Activated CD8-positive, alpha-beta memory T cell treated with anti-CD3 and anti-CD28 coated beads, Interleukin-2, amount 10 ng/mL, durations not matched to agents 7 days and 5 days (primary cell): ENCODE measurements at regions of chr6 and their contacts with region 1.

Region 1: GRCh38 chr6:85482905-85483700 is 33.2 kb downstream of the NT5E start:
- DNase-seq: peak; percentile 89
- ATAC-seq: peak; percentile 97
- H3K4me3 Mint-ChIP-seq: no peak overlapping the region
- H3K27ac Mint-ChIP-seq: peak overlapping the region; percentile 6
- H3K4me1 Mint-ChIP-seq: peaks cover 16% of the 10 kb centered on the region
- H3K27me3 Mint-ChIP-seq: no peaks in the 10 kb centered on the region

Region 2: GRCh38 chr6:85360794-85361642 is 122.1 kb before region 1 on chr6:
- CTCF ChIA-PET with region 1: interaction called, 97 read pairs
- DNase-seq: no peak
- ATAC-seq: peak; percentile 55
- H3K4me3 Mint-ChIP-seq: no peak overlapping the region
- H3K27ac Mint-ChIP-seq: no peak overlapping the region
- H3K4me1 Mint-ChIP-seq: peaks cover 12% of the 10 kb centered on the region
- H3K27me3 Mint-ChIP-seq: peaks cover 3% of the 10 kb centered on the region

Region 3: GRCh38 chr6:85449818-85450759 is 33.0 kb before region 1 on chr6 and contains the start of gene NT5E:
- CTCF ChIA-PET with region 1: interaction called, 95 read pairs
- DNase-seq: peak; percentile 83
- ATAC-seq: peak; percentile 75
- H3K4me3 Mint-ChIP-seq: peak within 1 kb of the TSS; percentile 92
- H3K27ac Mint-ChIP-seq: peak within 1 kb of the TSS; percentile 94
- H3K4me1 Mint-ChIP-seq: peaks cover 58% of the 10 kb centered on the region
- H3K27me3 Mint-ChIP-seq: peaks cover 20% of the 10 kb centered on the region
- total RNA-seq, gene NT5E: 17.3 to 24.1 TPM

Region 4: GRCh38 chr6:85468261-85468660 is 14.8 kb before region 1 on chr6:
- CTCF ChIA-PET with region 1: interaction called, 59 read pairs
- DNase-seq: no peak
- ATAC-seq: no peak
- H3K4me3 Mint-ChIP-seq: no peak overlapping the region
- H3K27ac Mint-ChIP-seq: no peak overlapping the region
- H3K4me1 Mint-ChIP-seq: peaks cover 45% of the 10 kb centered on the region
- H3K27me3 Mint-ChIP-seq: peaks cover 5% of the 10 kb centered on the region

Region 5: DNA sequence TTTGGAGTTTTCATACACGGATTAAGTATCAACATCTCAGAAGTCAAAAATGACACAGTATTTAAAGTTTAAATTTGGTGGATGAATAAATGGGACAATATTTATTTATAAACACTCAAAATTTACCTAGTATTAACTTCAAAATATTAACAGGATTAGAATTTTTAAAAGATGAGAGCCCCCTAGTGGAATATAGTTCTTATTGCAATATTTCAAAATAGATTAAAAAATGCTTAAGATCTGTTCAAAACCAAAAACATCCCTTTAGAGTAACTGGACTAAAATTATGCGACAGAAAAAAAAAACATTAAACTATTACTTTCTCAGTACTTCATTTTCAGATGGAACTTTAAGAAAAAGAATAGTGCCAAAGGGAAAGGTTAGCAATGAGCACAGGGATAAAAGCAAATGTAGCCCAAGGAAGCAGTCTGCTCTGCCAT is 54.0 kb after region 1 on chr6:
- CTCF ChIA-PET with region 1: interaction called, 17 read pairs
- DNase-seq: no peak
- ATAC-seq: no peak
- H3K4me3 Mint-ChIP-seq: no peak overlapping the region
- H3K27ac Mint-ChIP-seq: peak overlapping the region; percentile 19
- H3K4me1 Mint-ChIP-seq: peaks cover 2% of the 10 kb centered on the region
- H3K27me3 Mint-ChIP-seq: no peaks in the 10 kb centered on the region

Region 6: DNA sequence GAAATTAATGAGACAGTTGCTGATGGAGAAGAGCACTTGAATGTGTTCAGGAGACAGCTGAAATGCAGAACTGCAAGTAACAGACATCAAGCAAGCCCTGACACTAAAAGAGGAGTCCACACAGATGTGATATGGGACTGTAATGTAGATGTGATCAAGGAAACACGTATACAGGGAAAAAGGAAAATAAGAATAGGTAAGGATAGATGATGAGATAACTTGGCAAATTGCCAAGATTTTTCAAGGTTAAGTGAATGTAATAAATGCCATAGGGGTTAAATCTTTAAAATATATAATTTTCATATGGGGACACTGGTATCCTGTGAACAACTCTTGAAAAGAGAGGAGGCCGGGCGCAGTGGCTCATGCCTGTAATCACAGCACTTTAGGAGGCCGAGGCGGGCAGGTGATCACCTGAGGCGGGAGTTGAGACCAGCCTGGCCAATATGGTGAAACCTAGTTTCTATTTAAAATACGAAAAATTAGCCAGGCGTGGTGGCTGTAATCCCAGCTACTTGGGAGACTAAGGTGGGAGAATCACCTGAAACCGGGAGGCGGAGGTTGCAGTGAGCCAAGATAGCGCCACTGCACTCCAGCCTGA is 117.7 kb after region 1 on chr6:
- CTCF ChIA-PET with region 1: no interaction called
- DNase-seq: no peak
- ATAC-seq: no peak
- H3K4me3 Mint-ChIP-seq: no peak overlapping the region
- H3K27ac Mint-ChIP-seq: no peak overlapping the region
- H3K4me1 Mint-ChIP-seq: peaks cover 1% of the 10 kb centered on the region
- H3K27me3 Mint-ChIP-seq: no peaks in the 10 kb centered on the region

Region 7: GRCh38 chr6:86028776-86029175 is 545.7 kb after region 1 on chr6:
- CTCF ChIA-PET with region 1: no interaction called
- DNase-seq: no peak
- ATAC-seq: no peak
- H3K4me3 Mint-ChIP-seq: no peak overlapping the region
- H3K27ac Mint-ChIP-seq: no peak overlapping the region
- H3K4me1 Mint-ChIP-seq: no peaks in the 10 kb centered on the region
- H3K27me3 Mint-ChIP-seq: no peaks in the 10 kb centered on the region